ENCODE measurements at regions of chr22 and their contacts with region 1.

Region 1: DNA sequence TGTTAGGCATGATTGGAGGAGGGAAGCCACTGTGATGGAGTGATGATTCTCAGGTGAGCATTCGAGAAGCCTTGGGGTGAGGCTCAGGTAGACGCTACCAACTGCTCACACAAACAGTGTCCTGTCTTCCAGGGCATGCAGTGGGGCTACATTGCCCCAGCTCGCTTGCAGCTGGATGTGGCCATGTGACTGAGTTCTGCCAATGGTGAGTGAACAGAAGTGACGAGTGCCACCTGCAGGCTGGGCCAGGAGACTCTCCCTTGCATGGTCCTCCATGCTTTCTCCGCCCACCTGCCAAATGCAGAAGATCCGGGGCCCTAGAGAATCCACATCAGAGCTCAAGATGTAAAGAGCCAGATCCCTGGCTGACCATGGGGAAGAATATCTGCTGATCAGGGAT is 195.9 kb downstream of the BCR start:
- DNase-seq: peak; percentile 1
- ATAC-seq: peak; percentile 100
- H3K4me3 ChIP-seq: no peak overlapping the region
- H3K27ac ChIP-seq: no peak overlapping the region
- H3K4me1 ChIP-seq: no peaks in the 10 kb centered on the region
- H3K27me3 ChIP-seq: no peaks in the 10 kb centered on the region
- CTCF ChIP-seq: peak; percentile 63 to 67 (median 65)
- EP300 ChIP-seq: no peak
- POLR2A ChIP-seq: no peak
- RAD21 ChIP-seq: peak; percentile 35; the same call in 1 of the 2 replicates

Region 2: GRCh38 chr22:23322547-23322946 is 53.7 kb before region 1 on chr22:
- CTCF ChIA-PET with region 1: interaction called, 7 read pairs
- POLR2A ChIA-PET with region 1: no interaction called
- RAD21 ChIA-PET with region 1: interaction called, 3 read pairs
- SMC1A ChIA-PET with region 1: interaction called, 4 read pairs
- in situ Hi-C with region 1: loop called (anchors 5 kb)
- intact Hi-C with region 1: loop called (anchors 5 kb)
- DNase-seq: no peak
- ATAC-seq: no peak
- H3K4me3 ChIP-seq: no peak overlapping the region
- H3K27ac ChIP-seq: no peak overlapping the region
- H3K4me1 ChIP-seq: no peaks in the 10 kb centered on the region
- H3K27me3 ChIP-seq: no peaks in the 10 kb centered on the region
- CTCF ChIP-seq: no peak
- EP300 ChIP-seq: no peak
- POLR2A ChIP-seq: no peak
- RAD21 ChIP-seq: no peak